Posterior vena cava (tissue), 2 donors: ENCODE measurements at regions of chr15 and their contacts with region 1.

Region 1: DNA sequence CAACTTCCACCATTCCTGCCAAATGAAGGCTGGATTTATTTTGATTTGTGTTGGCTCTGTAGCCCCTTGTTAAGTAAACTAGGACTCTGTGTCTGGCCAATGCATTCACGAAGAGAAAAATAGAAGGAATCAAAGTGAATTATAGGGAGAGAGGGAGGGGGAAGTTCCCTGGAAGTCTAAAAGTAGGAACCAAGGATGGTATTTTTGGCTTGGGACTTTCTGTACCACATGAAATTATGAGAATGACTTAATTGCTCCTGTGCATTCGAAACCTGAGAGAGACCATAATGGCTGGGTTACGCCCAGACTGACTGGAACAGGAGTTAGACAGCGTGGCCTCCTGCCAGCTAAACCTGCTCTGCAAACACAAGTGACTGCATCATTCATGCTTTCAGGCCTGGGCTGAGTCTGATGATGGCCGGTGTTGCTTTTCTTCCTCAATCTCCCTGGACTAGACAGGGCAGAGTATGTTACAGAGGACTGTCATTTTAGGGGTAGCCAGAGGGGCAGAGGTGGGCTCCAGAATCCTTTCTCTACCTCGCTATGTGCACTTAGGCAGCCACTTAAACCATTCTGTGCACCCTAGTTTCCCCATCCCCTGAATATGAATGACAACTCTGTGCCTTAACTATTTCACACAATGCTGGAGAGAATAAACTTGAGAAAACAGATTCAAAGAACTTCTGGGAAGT is 58.9 kb downstream of the MYO1E start:
- DNase-seq: peak; percentile 94

Region 2: GRCh38 chr15:59372352-59373211 is 58.8 kb after region 1 on chr15 and contains the start of gene MYO1E:
- intact Hi-C with region 1: loop called in 1 of 2 experiments (anchors 10 kb)
- DNase-seq: peak; percentile 94
- total RNA-seq, gene MYO1E: 113 to 193 TPM